GM12878 (cell line): ENCODE measurements at regions of chr21 and their contacts with region 1.

Region 1: GRCh38 chr21:14686466-14687267 is 140.6 kb upstream of the SAMSN1 start:
- DNase-seq: peak; percentile 86
- ATAC-seq: peak; percentile 70
- H3K4me3 ChIP-seq: peak overlapping the region; percentile 26; the same call in 1 of the 2 replicates
- H3K27ac ChIP-seq: peak overlapping the region; percentile 88
- H3K4me1 ChIP-seq: peaks cover 57% of the 10 kb centered on the region
- H3K27me3 ChIP-seq: no peaks in the 10 kb centered on the region
- CTCF ChIP-seq: no peak
- EP300 ChIP-seq: peak; percentile 33 to 50; a peak in 2 of 4 replicates
- POLR2A ChIP-seq: no peak
- RAD21 ChIP-seq: no peak; the same call in 1 of the 2 replicates

Region 2: GRCh38 chr21:14533504-14534428 is 152.9 kb before region 1 on chr21:
- CTCF ChIA-PET with region 1: interaction called, 3 read pairs
- POLR2A ChIA-PET with region 1: interaction called, 3 read pairs
- RAD21 ChIA-PET with region 1: interaction called, 14 read pairs
- SMC1A ChIA-PET with region 1: interaction called, 17 read pairs
- in situ Hi-C with region 1: loop called (anchors 5 kb)
- intact Hi-C with region 1: loop called (anchors 5 kb)
- DNase-seq: peak; percentile 56
- ATAC-seq: peak; percentile 89
- H3K4me3 ChIP-seq: peak overlapping the region; percentile 61; the same call in 1 of the 2 replicates
- H3K27ac ChIP-seq: peak overlapping the region; percentile 78
- H3K4me1 ChIP-seq: peaks cover 15% of the 10 kb centered on the region; the same call in 1 of the 2 replicates
- H3K27me3 ChIP-seq: no peaks in the 10 kb centered on the region
- CTCF ChIP-seq: no peak
- EP300 ChIP-seq: peak; percentile 92 to 97
- POLR2A ChIP-seq: no peak
- RAD21 ChIP-seq: no peak

Region 3: GRCh38 chr21:14567331-14568279 is 119.1 kb before region 1 on chr21:
- CTCF ChIA-PET with region 1: no interaction called
- POLR2A ChIA-PET with region 1: no interaction called
- RAD21 ChIA-PET with region 1: interaction called, 11 read pairs
- SMC1A ChIA-PET with region 1: interaction called, 7 read pairs
- in situ Hi-C with region 1: no loop called
- intact Hi-C with region 1: no loop called
- DNase-seq: no peak
- ATAC-seq: peak; percentile 81
- H3K4me3 ChIP-seq: peak overlapping the region; percentile 42
- H3K27ac ChIP-seq: peak overlapping the region; percentile 69
- H3K4me1 ChIP-seq: peaks cover 22% of the 10 kb centered on the region
- H3K27me3 ChIP-seq: no peaks in the 10 kb centered on the region
- CTCF ChIP-seq: no peak
- EP300 ChIP-seq: no peak
- POLR2A ChIP-seq: no peak
- RAD21 ChIP-seq: no peak

Region 4: GRCh38 chr21:14602382-14602958 is 84.2 kb before region 1 on chr21:
- CTCF ChIA-PET with region 1: interaction called, 4 read pairs
- POLR2A ChIA-PET with region 1: no interaction called
- RAD21 ChIA-PET with region 1: interaction called, 5 read pairs
- SMC1A ChIA-PET with region 1: interaction called, 16 read pairs
- in situ Hi-C with region 1: no loop called
- intact Hi-C with region 1: no loop called
- DNase-seq: no peak
- ATAC-seq: peak; percentile 90
- H3K4me3 ChIP-seq: peak overlapping the region; percentile 18; the same call in 1 of the 2 replicates
- H3K27ac ChIP-seq: no peak overlapping the region
- H3K4me1 ChIP-seq: peaks cover 3% of the 10 kb centered on the region; the same call in 1 of the 2 replicates
- H3K27me3 ChIP-seq: no peaks in the 10 kb centered on the region
- CTCF ChIP-seq: no peak
- EP300 ChIP-seq: no peak
- POLR2A ChIP-seq: no peak
- RAD21 ChIP-seq: no peak

Region 5: GRCh38 chr21:14722841-14723483 is 36.3 kb after region 1 on chr21:
- CTCF ChIA-PET with region 1: interaction called, 4 read pairs
- POLR2A ChIA-PET with region 1: interaction called, 6 read pairs
- RAD21 ChIA-PET with region 1: interaction called, 6 read pairs
- SMC1A ChIA-PET with region 1: interaction called, 14 read pairs
- in situ Hi-C with region 1: no loop called
- intact Hi-C with region 1: no loop called
- DNase-seq: peak; percentile 61
- ATAC-seq: peak; percentile 96
- H3K4me3 ChIP-seq: no peak overlapping the region
- H3K27ac ChIP-seq: no peak overlapping the region
- H3K4me1 ChIP-seq: peaks cover 9% of the 10 kb centered on the region
- H3K27me3 ChIP-seq: no peaks in the 10 kb centered on the region
- CTCF ChIP-seq: no peak
- EP300 ChIP-seq: peak; percentile 20 to 38; a peak in 1 of 4 replicates
- POLR2A ChIP-seq: no peak
- RAD21 ChIP-seq: 0 out of 2 replicates have a peak, but pooled peaks have one; percentile 1

Region 6: GRCh38 chr21:14762734-14763694 is 76.3 kb after region 1 on chr21:
- CTCF ChIA-PET with region 1: interaction called, 4 read pairs
- POLR2A ChIA-PET with region 1: interaction called, 6 read pairs
- RAD21 ChIA-PET with region 1: interaction called, 15 read pairs
- SMC1A ChIA-PET with region 1: interaction called, 14 read pairs
- in situ Hi-C with region 1: no loop called
- intact Hi-C with region 1: loop called (anchors 2 kb)
- DNase-seq: peak; percentile 82
- ATAC-seq: peak; percentile 97
- H3K4me3 ChIP-seq: peak overlapping the region; percentile 59
- H3K27ac ChIP-seq: peak overlapping the region; percentile 87
- H3K4me1 ChIP-seq: peaks cover 10% of the 10 kb centered on the region
- H3K27me3 ChIP-seq: no peaks in the 10 kb centered on the region
- CTCF ChIP-seq: no peak
- EP300 ChIP-seq: peak; percentile 89 to 98
- POLR2A ChIP-seq: no peak
- RAD21 ChIP-seq: 0 out of 2 replicates have a peak, but pooled peaks have one; percentile 24

Region 7: GRCh38 chr21:15908187-15908586 is 1221.5 kb after region 1 on chr21:
- CTCF ChIA-PET with region 1: no interaction called
- POLR2A ChIA-PET with region 1: no interaction called
- RAD21 ChIA-PET with region 1: no interaction called
- SMC1A ChIA-PET with region 1: no interaction called
- in situ Hi-C with region 1: no loop called
- intact Hi-C with region 1: no loop called
- DNase-seq: no peak
- ATAC-seq: no peak
- H3K4me3 ChIP-seq: no peak overlapping the region
- H3K27ac ChIP-seq: no peak overlapping the region
- H3K4me1 ChIP-seq: no peaks in the 10 kb centered on the region
- H3K27me3 ChIP-seq: no peaks in the 10 kb centered on the region
- CTCF ChIP-seq: no peak
- EP300 ChIP-seq: no peak
- POLR2A ChIP-seq: no peak
- RAD21 ChIP-seq: no peak